Activated CD4-positive, alpha-beta memory T cell treated with anti-CD3 and anti-CD28 coated beads, Interleukin-2, amount 10 ng/mL, durations not matched to agents 7 days and 5 days (primary cell): ENCODE measurements at regions of chr12 and their contacts with region 1.

Region 1: GRCh38 chr12:49288412-49288853 is 6.5 kb upstream of the PRPH start:
- DNase-seq: peak; percentile 77
- H3K4me3 Mint-ChIP-seq: no peak overlapping the region
- H3K27ac Mint-ChIP-seq: no peak overlapping the region
- H3K4me1 Mint-ChIP-seq: peaks cover 8% of the 10 kb centered on the region
- H3K27me3 Mint-ChIP-seq: peaks cover 34% of the 10 kb centered on the region

Region 2: DNA sequence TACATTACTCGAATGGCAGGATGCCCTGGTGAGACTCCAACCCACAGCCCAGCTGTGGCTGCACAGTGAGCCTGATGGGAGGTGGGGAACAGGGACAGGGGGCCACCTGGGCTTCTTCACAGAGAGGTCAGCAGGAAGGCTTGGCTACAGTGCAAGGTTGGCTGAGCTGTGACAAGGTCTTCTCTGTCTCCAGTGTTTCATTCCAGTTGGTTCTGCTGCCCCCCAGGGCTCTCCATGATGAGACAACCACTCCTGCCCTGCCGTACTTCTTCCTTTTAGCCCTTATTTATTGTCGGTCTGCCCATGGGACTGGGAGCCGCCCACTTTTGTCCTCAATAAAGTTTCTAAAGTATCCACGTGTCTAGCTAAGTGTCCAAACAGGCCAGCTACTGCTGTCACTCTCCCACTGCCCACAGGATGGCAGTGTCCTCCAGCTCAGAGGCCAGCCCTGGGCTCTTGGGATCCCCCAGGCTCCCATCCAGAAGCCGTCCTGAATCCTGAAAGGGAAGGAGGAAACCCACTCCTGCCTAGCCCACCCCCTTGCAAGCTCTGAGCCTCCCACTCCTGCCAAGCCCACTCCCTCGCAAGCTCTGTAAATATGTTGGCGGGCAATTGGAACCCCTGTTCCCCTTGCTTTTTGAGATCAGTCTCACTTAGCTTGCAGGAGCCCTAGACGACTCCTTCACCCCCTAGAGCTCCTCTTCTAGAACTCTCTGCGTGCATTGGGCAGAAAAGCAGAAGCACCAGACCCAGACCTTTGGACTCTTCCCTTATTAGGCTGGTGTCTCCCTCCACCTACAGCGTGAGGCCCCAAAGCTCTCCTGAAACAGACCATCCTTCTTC is 43.2 kb after region 1 on chr12:
- CTCF ChIA-PET with region 1: interaction called, 16 read pairs
- POLR2A ChIA-PET with region 1: interaction called, 17 read pairs
- DNase-seq: no peak
- H3K4me3 Mint-ChIP-seq: no peak overlapping the region
- H3K27ac Mint-ChIP-seq: no peak overlapping the region
- H3K4me1 Mint-ChIP-seq: peaks cover 4% of the 10 kb centered on the region
- H3K27me3 Mint-ChIP-seq: peaks cover 34% of the 10 kb centered on the region

Region 3: GRCh38 chr12:49336645-49337584 is 48.5 kb after region 1 on chr12 and contains the start of gene C1QL4:
- CTCF ChIA-PET with region 1: interaction called, 52 read pairs
- POLR2A ChIA-PET with region 1: interaction called, 17 read pairs
- DNase-seq: peak; percentile 87
- H3K4me3 Mint-ChIP-seq: peak within 1 kb of the TSS; percentile 59
- H3K27ac Mint-ChIP-seq: no peak within 1 kb of the TSS
- H3K4me1 Mint-ChIP-seq: peaks cover 19% of the 10 kb centered on the region
- H3K27me3 Mint-ChIP-seq: peaks cover 86% of the 10 kb centered on the region
- total RNA-seq, gene C1QL4: not detected

Region 4: DNA sequence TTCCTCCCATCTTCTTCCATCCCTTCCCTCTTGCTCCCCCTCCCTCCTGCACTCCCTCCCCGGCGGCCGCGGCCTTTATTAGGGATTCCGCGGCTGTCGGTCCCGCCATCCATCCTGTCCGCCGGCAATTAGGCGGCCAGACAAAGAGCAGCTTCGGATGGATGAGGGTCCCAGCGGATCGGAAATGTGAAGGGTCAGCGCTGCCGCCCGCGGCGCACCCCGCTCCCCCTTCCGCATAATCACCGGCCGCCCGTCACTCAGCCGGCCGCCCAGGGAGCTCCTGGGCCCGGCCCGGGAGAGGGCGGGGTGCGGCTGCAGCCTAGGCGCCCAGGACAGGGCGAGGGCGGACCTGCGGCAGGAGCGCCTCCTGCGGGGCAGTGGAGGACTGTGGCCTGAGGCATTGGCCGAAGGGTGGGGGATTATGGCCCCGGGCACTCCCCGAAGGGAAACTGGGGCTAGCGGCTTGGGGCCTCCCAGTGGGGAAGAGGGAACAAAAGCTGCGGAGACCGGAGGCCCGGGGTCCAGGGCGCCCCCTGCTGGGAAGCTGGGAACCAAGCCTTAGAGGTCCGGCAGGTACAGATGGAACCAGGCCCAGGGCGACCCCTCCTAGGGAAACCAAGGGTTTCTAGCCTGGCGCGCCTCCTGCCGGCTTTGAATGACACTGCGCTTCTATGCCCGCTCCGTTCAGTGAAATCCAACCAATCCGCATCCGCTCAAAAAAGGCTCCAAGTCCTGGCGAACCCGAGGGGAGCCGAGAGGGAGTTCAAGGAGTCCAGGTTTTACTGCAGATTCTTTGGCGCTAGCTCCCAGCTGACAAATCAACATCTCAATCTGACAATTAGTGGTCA is 53.9 kb after region 1 on chr12:
- CTCF ChIA-PET with region 1: interaction called, 161 read pairs
- POLR2A ChIA-PET with region 1: interaction called, 17 read pairs
- DNase-seq: peak; percentile 80
- H3K4me3 Mint-ChIP-seq: peak overlapping the region; percentile 35
- H3K27ac Mint-ChIP-seq: no peak overlapping the region
- H3K4me1 Mint-ChIP-seq: peaks cover 40% of the 10 kb centered on the region
- H3K27me3 Mint-ChIP-seq: peaks cover 90% of the 10 kb centered on the region

Region 5: DNA sequence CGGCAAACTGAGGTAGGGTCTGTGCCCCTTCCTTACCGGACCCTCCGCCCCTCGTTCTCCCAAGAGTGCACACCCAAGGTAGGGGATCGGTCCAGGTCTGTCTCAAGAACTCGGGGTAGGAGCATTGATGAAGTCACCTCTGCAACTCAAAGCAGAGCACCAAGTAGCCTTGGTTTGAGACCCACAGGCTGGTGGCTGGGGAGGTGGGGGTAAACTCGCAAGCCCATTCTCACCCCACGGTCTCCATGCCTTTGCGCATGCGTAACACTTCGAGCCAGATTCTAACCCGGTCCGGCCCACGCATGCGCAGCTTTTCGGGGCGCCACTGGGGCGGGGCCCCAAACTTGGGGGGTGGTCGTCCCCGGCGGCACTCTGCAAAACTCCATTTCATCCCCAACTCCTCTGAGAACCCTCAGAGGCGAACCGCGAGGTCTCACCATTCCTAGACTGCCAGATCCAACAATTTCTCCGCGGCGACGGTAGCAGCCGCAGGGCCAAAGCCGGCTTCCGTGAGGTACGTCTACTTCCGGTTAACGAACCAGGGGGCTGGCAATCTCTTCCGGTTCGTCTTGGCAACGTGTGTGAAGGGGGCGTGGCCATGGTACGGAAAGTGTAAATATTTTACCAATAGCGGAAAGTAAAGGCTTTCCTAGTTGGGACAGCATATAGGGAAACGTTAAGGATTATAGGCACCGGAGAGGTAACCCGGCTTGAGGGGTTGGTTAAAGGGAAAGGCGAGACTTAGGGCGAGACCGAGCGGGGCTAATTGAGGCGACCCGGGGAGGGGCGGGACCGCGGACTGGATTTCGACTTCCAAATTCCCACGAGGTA is 279.4 kb after region 1 on chr12 and contains the start of gene MCRS1:
- CTCF ChIA-PET with region 1: no interaction called
- POLR2A ChIA-PET with region 1: no interaction called
- DNase-seq: peak; percentile 90
- H3K4me3 Mint-ChIP-seq: peak within 1 kb of the TSS; percentile 97
- H3K27ac Mint-ChIP-seq: peak within 1 kb of the TSS; percentile 89
- H3K4me1 Mint-ChIP-seq: peaks cover 65% of the 10 kb centered on the region
- H3K27me3 Mint-ChIP-seq: no peaks in the 10 kb centered on the region
- total RNA-seq, gene MCRS1: 70.5 to 73.1 TPM

Region 6: DNA sequence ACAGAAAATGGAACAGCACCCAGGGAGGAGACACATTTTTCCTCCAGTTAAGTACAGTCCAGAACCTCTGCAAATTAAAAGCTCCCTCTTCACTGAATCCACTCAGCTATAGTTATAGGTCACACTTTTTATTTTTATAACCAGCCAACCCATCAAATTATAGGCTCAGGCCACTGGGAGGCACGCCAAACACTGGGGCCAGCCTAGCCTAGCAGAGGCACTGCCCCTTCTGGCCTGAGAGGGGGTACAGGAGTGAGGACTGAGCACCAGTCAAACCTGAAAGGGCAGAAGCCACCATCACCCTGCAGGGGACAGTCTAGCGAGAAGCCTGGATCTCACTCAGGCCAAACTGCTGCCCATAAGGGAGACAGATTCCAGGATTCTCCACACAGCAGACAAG is 399.5 kb after region 1 on chr12:
- CTCF ChIA-PET with region 1: no interaction called
- POLR2A ChIA-PET with region 1: no interaction called
- DNase-seq: no peak
- H3K4me3 Mint-ChIP-seq: no peak overlapping the region
- H3K27ac Mint-ChIP-seq: no peak overlapping the region
- H3K4me1 Mint-ChIP-seq: peaks cover 5% of the 10 kb centered on the region
- H3K27me3 Mint-ChIP-seq: no peaks in the 10 kb centered on the region